ENCODE measurements at regions of chr14 and their contacts with region 1.

Region 1: DNA sequence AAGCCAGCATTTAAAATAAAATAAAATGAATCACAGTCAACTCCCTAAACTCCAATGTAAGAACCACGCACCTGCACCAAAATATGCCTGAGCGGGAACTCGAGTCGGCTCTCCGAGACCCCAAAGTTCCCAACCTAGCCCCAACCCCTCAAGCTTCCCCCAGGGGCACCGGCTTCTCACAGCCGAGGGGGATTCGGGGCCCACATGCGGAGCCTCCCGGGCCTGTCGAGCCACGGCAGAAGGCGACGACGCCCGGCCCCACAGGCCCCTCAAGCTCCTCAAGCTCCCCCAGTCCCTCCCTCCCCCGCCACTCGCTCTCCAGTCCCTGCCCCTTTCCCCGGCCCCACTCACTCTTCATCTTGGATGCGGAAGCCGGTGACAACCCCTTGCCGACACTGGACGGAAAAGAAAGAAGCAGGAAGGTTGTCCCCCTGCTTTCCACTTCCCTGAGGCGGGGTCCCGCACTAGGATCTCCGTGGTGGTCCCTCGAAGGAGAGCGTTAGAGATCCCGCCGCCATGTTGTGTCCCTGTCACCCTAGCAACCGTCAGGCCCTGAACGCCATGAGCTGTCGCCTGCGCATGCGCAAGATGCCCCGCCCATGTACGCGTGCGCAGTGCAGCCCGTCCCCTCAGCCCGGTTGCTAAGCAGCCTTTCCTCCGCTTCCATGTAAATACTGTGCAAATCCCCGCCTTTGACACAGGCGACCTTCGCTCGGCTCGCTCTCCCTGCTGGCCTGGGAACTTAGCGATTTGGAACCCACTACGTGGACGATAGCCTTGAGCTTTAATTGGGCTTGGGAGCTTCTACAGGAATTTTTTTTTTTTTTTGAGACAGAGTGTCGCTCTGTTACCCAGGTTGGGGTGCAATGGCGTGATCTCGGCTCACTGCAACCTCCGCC is at the start of gene MOK:
- DNase-seq: peak; percentile 97 to 98 (median 97)
- H3K4me3 ChIP-seq: peak within 1 kb of the TSS; percentile 32 to 95 (median 82)
- H3K27ac ChIP-seq: peak within 1 kb of the TSS; percentile 87 to 96
- H3K4me1 ChIP-seq: peaks cover 4 to 9% (median 6%) of the 10 kb centered on the region in 4 experiments
- H3K27me3 ChIP-seq: no peaks in the 10 kb centered on the region

Region 2: GRCh38 chr14:102316743-102317563 is 12.1 kb after region 1 on chr14:
- CTCF ChIA-PET with region 1: interaction called, 22 read pairs
- POLR2A ChIA-PET with region 1: interaction called, 4 read pairs
- DNase-seq: peak; percentile 86 to 91 (median 91)
- H3K4me3 ChIP-seq: peak overlapping the region; percentile 61 to 79 (median 76)
- H3K27ac ChIP-seq: peak overlapping the region in 1 of 2 experiments; percentile 78
- H3K4me1 ChIP-seq: peaks cover 0 to 52% (median 46%) of the 10 kb centered on the region in 4 experiments
- H3K27me3 ChIP-seq: no peaks in the 10 kb centered on the region

Measured in common myeloid progenitor, CD34-positive (primary cell).